PC-9 (cell line): ENCODE measurements at regions of chr12 and their contacts with region 1.

Region 1: DNA sequence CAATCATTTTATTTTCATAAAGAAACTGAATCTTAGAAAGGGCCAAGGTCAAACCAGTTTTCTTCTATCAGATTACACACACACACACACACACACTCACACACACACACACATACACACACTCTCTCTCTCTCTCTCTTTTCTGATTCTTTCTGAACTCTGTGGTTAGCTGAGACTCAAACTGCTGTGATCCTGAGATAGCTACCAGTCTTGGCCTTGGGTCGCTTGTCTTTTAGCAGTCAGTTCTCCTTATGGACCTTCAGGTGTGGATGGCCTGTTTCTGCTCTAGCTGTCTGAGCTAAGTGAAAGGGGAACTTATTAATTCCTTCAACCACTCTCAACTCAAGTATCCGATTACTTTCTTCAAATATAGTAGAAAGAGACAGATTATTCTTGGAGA is 145.1 kb downstream of the GRIP1 start:
- DNase-seq: no peak
- H3K4me3 ChIP-seq: no peak overlapping the region
- H3K27ac ChIP-seq: no peak overlapping the region
- H3K4me1 ChIP-seq: no peaks in the 10 kb centered on the region
- H3K27me3 ChIP-seq: no peaks in the 10 kb centered on the region
- CTCF ChIP-seq: no peak

Region 2: GRCh38 chr12:65306366-65307168 is 1227.2 kb before region 1 on chr12:
- CTCF ChIA-PET with region 1: no interaction called
- POLR2A ChIA-PET with region 1: no interaction called
- intact Hi-C with region 1: no loop called
- DNase-seq: peak in 1 of 2 experiments; percentile 32
- H3K4me3 ChIP-seq: no peak overlapping the region
- H3K27ac ChIP-seq: no peak overlapping the region
- H3K4me1 ChIP-seq: no peaks in the 10 kb centered on the region
- H3K27me3 ChIP-seq: no peaks in the 10 kb centered on the region
- CTCF ChIP-seq: peak; percentile 76

Region 3: DNA sequence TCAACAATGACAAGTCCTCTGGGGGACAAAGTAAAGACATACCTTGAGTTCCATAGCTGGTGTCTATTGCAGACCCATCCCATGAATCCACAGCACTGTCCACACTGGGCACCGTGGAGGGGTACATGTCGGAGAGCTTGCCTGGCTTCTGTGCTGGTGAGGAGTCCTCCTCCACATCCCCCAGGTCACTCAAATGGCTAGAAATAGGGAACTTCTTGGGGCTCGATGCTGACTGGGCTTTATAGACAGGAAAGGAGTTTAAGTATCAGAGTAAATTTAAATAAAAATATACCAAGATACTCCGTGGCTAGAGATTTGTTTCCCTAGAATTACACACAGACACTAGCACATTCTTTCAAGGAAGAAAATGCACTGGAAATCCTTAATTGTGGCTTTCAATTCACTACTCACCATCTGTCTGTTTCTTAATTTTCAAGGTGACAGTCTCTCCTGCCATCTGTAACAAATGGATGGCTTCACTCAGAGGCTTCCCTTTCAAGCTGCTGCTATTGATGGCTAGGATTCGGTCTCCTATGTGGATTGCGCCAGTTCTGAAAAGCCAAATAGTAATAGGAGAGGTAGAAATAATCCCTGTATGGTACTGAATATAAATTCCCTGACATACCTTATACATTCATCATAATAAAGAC is 141.4 kb before region 1 on chr12:
- CTCF ChIA-PET with region 1: no interaction called
- POLR2A ChIA-PET with region 1: interaction called, 16 read pairs
- intact Hi-C with region 1: no loop called
- DNase-seq: no peak
- H3K4me3 ChIP-seq: no peak overlapping the region
- H3K27ac ChIP-seq: no peak overlapping the region
- H3K4me1 ChIP-seq: no peaks in the 10 kb centered on the region
- H3K27me3 ChIP-seq: no peaks in the 10 kb centered on the region
- CTCF ChIP-seq: no peak

Region 4: GRCh38 chr12:66739933-66740648 is 206.3 kb after region 1 on chr12:
- CTCF ChIA-PET with region 1: no interaction called
- POLR2A ChIA-PET with region 1: no interaction called
- intact Hi-C with region 1: no loop called
- DNase-seq: peak; percentile 19 to 75
- H3K4me3 ChIP-seq: no peak overlapping the region
- H3K27ac ChIP-seq: no peak overlapping the region
- H3K4me1 ChIP-seq: peaks cover 11% of the 10 kb centered on the region
- H3K27me3 ChIP-seq: no peaks in the 10 kb centered on the region
- CTCF ChIP-seq: no peak